CD4-positive, alpha-beta T cell (primary cell): ENCODE measurements at regions of chr17 and their contacts with region 1.

Region 1: DNA sequence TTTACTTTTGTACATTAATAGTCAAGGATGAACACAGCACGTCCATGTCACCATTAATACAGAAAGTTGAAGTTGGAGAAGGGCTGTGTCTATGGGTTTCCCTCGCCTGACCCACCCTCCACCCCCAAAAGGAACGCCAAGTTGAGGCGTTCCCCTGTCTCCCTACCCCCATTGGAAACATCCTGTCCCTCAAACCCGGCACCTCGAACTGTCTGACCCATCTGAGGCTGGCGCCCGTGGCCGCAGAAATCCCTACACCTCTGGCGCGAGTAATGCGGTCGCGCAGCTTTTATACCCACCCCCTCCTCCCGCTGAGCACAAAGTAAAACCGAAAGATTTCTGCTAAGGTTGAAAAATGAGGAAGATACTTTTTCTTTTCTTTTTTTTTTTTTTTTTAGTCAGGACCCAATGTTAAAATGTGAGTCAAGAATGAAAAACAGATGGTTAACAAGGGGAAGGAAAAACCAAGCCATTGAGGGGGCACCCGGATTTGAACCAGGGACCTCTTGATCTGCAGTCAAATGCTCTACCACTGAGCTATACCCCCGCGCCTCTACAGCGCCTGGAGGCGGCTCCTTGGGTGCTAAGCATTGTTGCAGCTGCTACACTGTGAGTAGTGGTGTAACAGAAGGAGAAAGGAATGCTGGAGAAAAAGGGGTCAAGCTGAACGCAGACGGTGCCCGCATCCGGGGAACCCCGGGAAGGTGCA is 887 bp upstream of the LASP1 start:
- DNase-seq: peak; percentile 81 to 92 (median 86)
- ATAC-seq: peak; percentile 57
- H3K4me3 ChIP-seq: peak overlapping the region; percentile 97
- H3K4me3 Mint-ChIP-seq: peak overlapping the region; percentile 98
- H3K27ac ChIP-seq: peak overlapping the region; percentile 53 to 86
- H3K27ac Mint-ChIP-seq: peak overlapping the region; percentile 95
- H3K4me1 ChIP-seq: peaks cover 52% of the 10 kb centered on the region
- H3K4me1 Mint-ChIP-seq: peaks cover 52% of the 10 kb centered on the region
- H3K27me3 ChIP-seq: no peaks in the 10 kb centered on the region
- H3K27me3 Mint-ChIP-seq: peaks cover 13% of the 10 kb centered on the region
- CTCF ChIP-seq: no peak

Region 2: GRCh38 chr17:38702166-38702899 is 166.6 kb before region 1 on chr17:
- CTCF ChIA-PET with region 1: no interaction called
- POLR2A ChIA-PET with region 1: interaction called, 13 read pairs
- intact Hi-C with region 1: no loop called
- DNase-seq: peak; percentile 62 to 92 (median 76)
- ATAC-seq: peak; percentile 33
- H3K4me3 ChIP-seq: peak overlapping the region; percentile 73
- H3K4me3 Mint-ChIP-seq: peak overlapping the region; percentile 95
- H3K27ac ChIP-seq: peak overlapping the region; percentile 94 to 97
- H3K27ac Mint-ChIP-seq: peak overlapping the region; percentile 88
- H3K4me1 ChIP-seq: peaks cover 61% of the 10 kb centered on the region
- H3K4me1 Mint-ChIP-seq: peaks cover 50% of the 10 kb centered on the region
- H3K27me3 ChIP-seq: no peaks in the 10 kb centered on the region
- H3K27me3 Mint-ChIP-seq: no peaks in the 10 kb centered on the region
- CTCF ChIP-seq: no peak

Region 3: DNA sequence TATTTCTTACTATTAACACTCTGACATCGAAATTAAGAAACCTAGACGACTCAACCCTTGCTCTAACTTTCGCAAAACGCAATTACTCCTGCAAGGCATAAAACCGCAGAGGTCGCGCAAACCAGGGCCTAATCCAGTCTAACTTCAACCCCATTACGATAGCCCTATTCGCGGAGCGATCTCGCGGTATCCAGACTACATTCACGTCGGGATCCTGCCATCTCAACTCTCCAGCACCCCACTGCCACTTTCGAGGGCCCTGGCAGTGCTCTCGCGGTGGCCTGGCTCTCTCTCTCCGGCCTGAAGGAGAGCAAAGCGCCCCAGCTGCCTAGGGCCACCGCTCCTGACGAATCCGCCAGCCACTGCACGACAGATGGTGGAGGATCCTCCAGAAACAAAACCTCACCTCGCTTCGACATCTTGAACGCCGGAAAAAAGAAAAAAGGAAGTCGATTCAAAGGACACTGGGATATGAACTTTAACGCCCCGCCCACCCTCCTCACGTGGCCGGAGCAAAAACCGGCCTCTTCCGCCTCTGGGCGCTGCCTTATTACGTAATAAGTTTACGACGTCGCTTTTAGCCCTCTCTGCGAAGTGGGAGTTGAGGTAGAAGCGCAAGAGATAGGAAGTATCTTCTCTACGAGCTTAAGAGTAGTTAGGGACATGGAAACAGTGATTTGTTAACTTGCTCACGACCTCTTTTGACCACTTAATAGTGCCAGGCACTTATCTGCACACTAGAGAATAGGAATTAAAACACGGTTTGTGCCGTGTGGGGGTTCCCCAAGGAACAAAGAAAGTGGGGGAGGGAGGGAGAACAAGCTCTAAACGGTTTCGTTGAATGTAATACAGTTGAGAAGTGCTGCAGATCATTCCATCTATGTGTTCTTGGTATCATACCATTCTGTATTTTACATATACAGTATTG is 15.4 kb before region 1 on chr17 and contains the start of gene RPL23:
- CTCF ChIA-PET with region 1: interaction called, 17 read pairs
- POLR2A ChIA-PET with region 1: interaction called, 154 read pairs
- intact Hi-C with region 1: loop called (anchors 1 kb)
- DNase-seq: peak; percentile 77 to 97 (median 86)
- ATAC-seq: peak; percentile 80
- H3K4me3 ChIP-seq: peak within 1 kb of the TSS; percentile 67
- H3K4me3 Mint-ChIP-seq: peak within 1 kb of the TSS; percentile 90
- H3K27ac ChIP-seq: peak within 1 kb of the TSS; percentile 86 to 92
- H3K27ac Mint-ChIP-seq: peak within 1 kb of the TSS; percentile 96
- H3K4me1 ChIP-seq: peaks cover 29% of the 10 kb centered on the region
- H3K4me1 Mint-ChIP-seq: peaks cover 39% of the 10 kb centered on the region
- H3K27me3 ChIP-seq: no peaks in the 10 kb centered on the region
- H3K27me3 Mint-ChIP-seq: no peaks in the 10 kb centered on the region
- CTCF ChIP-seq: no peak
- total RNA-seq, gene RPL23: 2,293 to 2,296 TPM

Region 4: GRCh38 chr17:38898812-38899348 is 29.9 kb after region 1 on chr17:
- CTCF ChIA-PET with region 1: interaction called, 16 read pairs
- POLR2A ChIA-PET with region 1: interaction called, 56 read pairs
- intact Hi-C with region 1: loop called (anchors 2 kb)
- DNase-seq: peak; percentile 56 to 93 (median 81)
- ATAC-seq: peak; percentile 85
- H3K4me3 ChIP-seq: peak overlapping the region; percentile 45
- H3K4me3 Mint-ChIP-seq: peak overlapping the region; percentile 87
- H3K27ac ChIP-seq: peak overlapping the region; percentile 90 to 94
- H3K27ac Mint-ChIP-seq: peak overlapping the region; percentile 94
- H3K4me1 ChIP-seq: peaks cover 87% of the 10 kb centered on the region
- H3K4me1 Mint-ChIP-seq: peaks cover 69% of the 10 kb centered on the region
- H3K27me3 ChIP-seq: no peaks in the 10 kb centered on the region
- H3K27me3 Mint-ChIP-seq: no peaks in the 10 kb centered on the region
- CTCF ChIP-seq: no peak

Region 5: GRCh38 chr17:38960402-38960801 is 91.4 kb after region 1 on chr17:
- CTCF ChIA-PET with region 1: interaction called, 3 read pairs
- POLR2A ChIA-PET with region 1: interaction called, 10 read pairs
- intact Hi-C with region 1: loop called (anchors 5 kb)
- DNase-seq: peak in 1 of 14 experiments; percentile 41
- ATAC-seq: peak; percentile 85
- H3K4me3 ChIP-seq: peak overlapping the region; percentile 8
- H3K4me3 Mint-ChIP-seq: peak overlapping the region; percentile 42
- H3K27ac ChIP-seq: no peak overlapping the region
- H3K27ac Mint-ChIP-seq: peak overlapping the region; percentile 44
- H3K4me1 ChIP-seq: peaks cover 11% of the 10 kb centered on the region
- H3K4me1 Mint-ChIP-seq: peaks cover 37% of the 10 kb centered on the region
- H3K27me3 ChIP-seq: no peaks in the 10 kb centered on the region
- H3K27me3 Mint-ChIP-seq: no peaks in the 10 kb centered on the region
- CTCF ChIP-seq: no peak

Region 6: GRCh38 chr17:39057701-39058206 is 188.8 kb after region 1 on chr17:
- CTCF ChIA-PET with region 1: no interaction called
- POLR2A ChIA-PET with region 1: no interaction called
- intact Hi-C with region 1: loop called in 1 of 2 experiments (anchors 5 kb)
- DNase-seq: no peak
- ATAC-seq: no peak
- H3K4me3 ChIP-seq: no peak overlapping the region
- H3K4me3 Mint-ChIP-seq: peak overlapping the region; percentile 60
- H3K27ac ChIP-seq: no peak overlapping the region
- H3K27ac Mint-ChIP-seq: peak overlapping the region; percentile 81
- H3K4me1 ChIP-seq: peaks cover 12% of the 10 kb centered on the region
- H3K4me1 Mint-ChIP-seq: peaks cover 14% of the 10 kb centered on the region
- H3K27me3 ChIP-seq: no peaks in the 10 kb centered on the region
- H3K27me3 Mint-ChIP-seq: no peaks in the 10 kb centered on the region
- CTCF ChIP-seq: no peak